ENCODE measurements at regions of chr20 and their contacts with region 1.

Region 1: DNA sequence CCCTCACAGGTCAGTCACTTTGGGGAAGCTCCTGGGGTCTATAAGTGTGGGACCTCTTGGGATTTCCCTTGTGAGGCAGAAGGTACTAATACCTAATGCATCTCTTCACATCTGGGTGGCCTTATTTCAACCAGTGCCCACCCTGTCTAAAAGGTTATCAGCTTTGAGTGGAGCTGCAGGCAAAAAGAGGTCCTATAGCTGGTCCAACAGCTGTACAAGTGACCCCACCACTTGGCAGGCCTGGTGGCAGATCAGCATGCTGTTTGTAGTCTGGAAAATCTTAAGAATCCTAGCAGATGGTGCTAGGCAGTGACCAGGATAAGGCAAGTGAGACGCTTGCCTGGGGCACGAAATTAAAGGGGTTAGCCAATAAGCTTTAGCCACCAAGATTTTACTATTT is 51.6 kb upstream of the GTSF1L start:
- DNase-seq: no peak
- ATAC-seq: no peak
- H3K4me3 ChIP-seq: no peak overlapping the region
- H3K27ac ChIP-seq: no peak overlapping the region
- H3K4me1 ChIP-seq: no peaks in the 10 kb centered on the region
- H3K27me3 ChIP-seq: 0 out of 2 replicates have a peak, but pooled peaks cover 4% of the 10 kb centered on the region
- CTCF ChIP-seq: no peak

Region 2: GRCh38 chr20:43710370-43711044 is 67.9 kb before region 1 on chr20:
- CTCF ChIA-PET with region 1: no interaction called
- POLR2A ChIA-PET with region 1: interaction called, 11 read pairs
- in situ Hi-C with region 1: no loop called
- intact Hi-C with region 1: no loop called
- DNase-seq: no peak
- ATAC-seq: 0 out of 2 replicates have a peak, but pooled peaks have one; percentile 23
- H3K4me3 ChIP-seq: no peak overlapping the region
- H3K27ac ChIP-seq: no peak overlapping the region
- H3K4me1 ChIP-seq: no peaks in the 10 kb centered on the region
- H3K27me3 ChIP-seq: no peaks in the 10 kb centered on the region
- CTCF ChIP-seq: no peak

Region 3: GRCh38 chr20:43752561-43753301 is 25.6 kb before region 1 on chr20:
- CTCF ChIA-PET with region 1: no interaction called
- POLR2A ChIA-PET with region 1: no interaction called
- in situ Hi-C with region 1: no loop called
- intact Hi-C with region 1: no loop called
- DNase-seq: no peak
- ATAC-seq: no peak
- H3K4me3 ChIP-seq: no peak overlapping the region
- H3K27ac ChIP-seq: no peak overlapping the region
- H3K4me1 ChIP-seq: peaks cover 3% of the 10 kb centered on the region; the same call in 1 of the 2 replicates
- H3K27me3 ChIP-seq: no peaks in the 10 kb centered on the region
- CTCF ChIP-seq: no peak

Region 4: DNA sequence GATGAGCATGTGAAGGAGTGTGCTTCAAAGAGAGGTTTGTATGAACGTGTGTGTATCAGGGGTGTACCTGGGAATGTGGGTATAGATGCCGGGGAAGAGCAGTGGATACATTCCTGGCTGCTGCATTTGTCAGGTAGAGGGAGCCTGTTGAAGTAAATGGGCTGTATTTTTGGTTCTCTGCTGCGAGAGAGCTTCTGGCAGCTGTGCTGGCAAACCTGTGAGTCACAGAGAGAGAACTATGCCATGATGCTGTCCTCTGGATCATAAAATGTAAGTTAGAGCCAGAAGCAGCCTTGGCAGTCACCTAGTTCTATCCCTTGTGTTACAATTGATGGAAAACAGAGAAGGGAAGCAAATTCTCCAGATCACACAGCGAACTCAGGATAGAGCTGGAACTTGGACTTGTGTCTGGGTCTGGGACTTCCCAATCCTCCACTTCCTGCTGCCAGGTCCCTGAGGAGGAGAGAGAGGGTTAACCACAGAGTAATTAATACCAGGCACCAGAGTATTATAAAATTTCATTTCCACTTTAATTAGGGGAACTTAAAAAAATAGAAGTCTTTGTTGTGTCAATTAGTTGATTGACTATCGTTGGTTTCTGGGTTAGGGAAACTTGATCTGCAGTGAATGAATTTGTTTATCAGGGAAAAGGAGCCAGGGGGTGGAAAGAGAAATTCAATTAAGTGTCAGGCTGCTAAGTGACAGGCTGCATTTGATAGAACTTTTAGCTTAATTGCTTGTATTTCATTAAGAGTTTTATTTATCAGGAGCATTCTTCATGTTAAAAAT is 10.5 kb before region 1 on chr20:
- CTCF ChIA-PET with region 1: no interaction called
- POLR2A ChIA-PET with region 1: no interaction called
- in situ Hi-C with region 1: no loop called
- intact Hi-C with region 1: no loop called
- DNase-seq: no peak
- ATAC-seq: peak; percentile 61; the same call in 1 of the 2 replicates
- H3K4me3 ChIP-seq: no peak overlapping the region
- H3K27ac ChIP-seq: no peak overlapping the region
- H3K4me1 ChIP-seq: peaks cover 3% of the 10 kb centered on the region; the same call in 1 of the 2 replicates
- H3K27me3 ChIP-seq: peaks cover 13% of the 10 kb centered on the region
- CTCF ChIP-seq: no peak

Region 5: GRCh38 chr20:43963872-43964791 is 185.8 kb after region 1 on chr20:
- CTCF ChIA-PET with region 1: no interaction called
- POLR2A ChIA-PET with region 1: no interaction called
- in situ Hi-C with region 1: no loop called
- intact Hi-C with region 1: no loop called
- DNase-seq: no peak
- ATAC-seq: peak; percentile 31
- H3K4me3 ChIP-seq: no peak overlapping the region
- H3K27ac ChIP-seq: peak overlapping the region; percentile 91
- H3K4me1 ChIP-seq: peaks cover 62% of the 10 kb centered on the region
- H3K27me3 ChIP-seq: no peaks in the 10 kb centered on the region
- CTCF ChIP-seq: no peak